ENCODE measurements at regions of chr16 and their contacts with region 1.

Region 1: GRCh38 chr16:5928476-5929065 is 831.0 kb upstream of the EEF2KMT start:
- DNase-seq: peak; percentile 47 to 49
- H3K4me3 ChIP-seq: peak overlapping the region in 1 of 4 experiments; percentile 39; a peak in 1 of 8 replicates
- H3K27ac ChIP-seq: no peak overlapping the region
- H3K4me1 ChIP-seq: peaks cover 3 to 22% (median 15%) of the 10 kb centered on the region in 4 experiments; a peak in 6 of 7 replicates
- H3K27me3 ChIP-seq: peaks cover 7 to 25% (median 21%) of the 10 kb centered on the region in 4 experiments
- CTCF ChIP-seq: no peak
- EP300 ChIP-seq: no peak; a peak in 1 of 3 replicates
- POLR2A ChIP-seq: no peak
- RAD21 ChIP-seq: no peak

Region 2: DNA sequence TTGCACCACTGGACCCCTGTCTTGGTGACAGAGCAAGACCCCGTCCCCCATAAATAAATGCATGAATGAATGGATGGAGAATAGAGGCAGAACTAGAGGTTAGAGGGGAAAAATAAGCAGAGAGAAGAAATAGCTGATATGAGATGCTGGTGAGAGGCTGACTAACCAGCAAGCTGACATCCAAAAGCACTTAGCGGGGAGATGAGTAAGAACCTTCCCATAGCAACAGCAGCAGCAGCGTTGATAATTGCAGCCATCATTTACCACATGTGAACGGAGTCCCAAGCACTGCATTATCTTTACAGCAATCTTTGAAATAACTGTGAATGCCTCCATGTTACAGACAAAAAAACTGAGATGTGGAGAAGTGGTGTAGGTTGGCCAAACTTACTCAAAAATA is 53.7 kb before region 1 on chr16:
- CTCF ChIA-PET with region 1: no interaction called
- POLR2A ChIA-PET with region 1: no interaction called
- DNase-seq: no peak
- H3K4me3 ChIP-seq: no peak overlapping the region
- H3K27ac ChIP-seq: no peak overlapping the region
- H3K4me1 ChIP-seq: peaks cover 4 to 15% (median 6%) of the 10 kb centered on the region in 4 experiments; a peak in 5 of 7 replicates
- H3K27me3 ChIP-seq: no peaks in the 10 kb centered on the region
- CTCF ChIP-seq: no peak
- EP300 ChIP-seq: no peak
- POLR2A ChIP-seq: no peak
- RAD21 ChIP-seq: no peak

Region 3: DNA sequence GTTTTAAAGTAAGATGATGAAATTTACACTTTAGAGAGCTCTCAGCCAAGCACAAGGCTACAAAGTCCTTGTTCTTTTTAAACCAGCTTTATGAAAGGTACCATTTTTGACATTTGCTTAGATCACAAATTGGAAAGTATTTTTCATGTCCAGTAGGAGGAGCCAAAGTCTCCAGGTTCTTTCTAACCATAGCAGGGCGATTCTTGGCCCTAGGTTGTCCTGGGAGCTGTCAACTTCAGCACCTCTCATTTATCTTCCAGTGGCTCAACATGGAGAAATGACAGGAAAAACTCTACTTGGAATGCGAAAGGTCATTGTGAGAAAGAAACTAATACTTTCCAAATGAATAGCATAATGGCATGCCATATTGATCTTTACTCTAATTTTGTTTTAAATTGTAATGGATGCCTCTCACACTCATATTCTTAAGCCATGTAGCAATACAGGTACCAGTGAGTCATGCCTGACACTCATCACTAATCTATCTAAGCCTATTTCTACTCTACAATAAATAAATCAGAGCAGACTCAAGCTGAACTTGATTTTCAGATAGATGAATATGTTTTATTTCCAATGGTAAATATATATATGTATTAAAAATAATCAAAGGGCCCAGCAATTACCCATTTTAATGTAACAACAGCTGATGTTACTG is 88.1 kb after region 1 on chr16:
- CTCF ChIA-PET with region 1: interaction called, 12 read pairs
- POLR2A ChIA-PET with region 1: no interaction called
- DNase-seq: no peak
- H3K4me3 ChIP-seq: no peak overlapping the region
- H3K27ac ChIP-seq: no peak overlapping the region
- H3K4me1 ChIP-seq: peaks cover 0 to 4% (median under 1%) of the 10 kb centered on the region in 4 experiments; a peak in 3 of 7 replicates
- H3K27me3 ChIP-seq: peaks cover 20 to 40% (median 36%) of the 10 kb centered on the region in 4 experiments
- CTCF ChIP-seq: peak in 2 of 3 experiments; percentile 69 to 74; a peak in 3 of 4 replicates
- EP300 ChIP-seq: no peak
- POLR2A ChIP-seq: no peak
- RAD21 ChIP-seq: peak; percentile 77 to 85